CD4-positive, alpha-beta T cell (primary cell): ENCODE measurements at regions of chr7 and their contacts with region 1.

Region 1: GRCh38 chr7:23696916-23697441 is 13.0 kb upstream of the STK31 start:
- DNase-seq: peak; percentile 24 to 76 (median 45)
- ATAC-seq: peak; percentile 49
- H3K4me3 ChIP-seq: no peak overlapping the region
- H3K4me3 Mint-ChIP-seq: no peak overlapping the region
- H3K27ac ChIP-seq: no peak overlapping the region
- H3K27ac Mint-ChIP-seq: no peak overlapping the region
- H3K4me1 ChIP-seq: peaks cover 5% of the 10 kb centered on the region
- H3K4me1 Mint-ChIP-seq: no peaks in the 10 kb centered on the region
- H3K27me3 ChIP-seq: no peaks in the 10 kb centered on the region
- H3K27me3 Mint-ChIP-seq: no peaks in the 10 kb centered on the region
- CTCF ChIP-seq: peak; percentile 70

Region 2: GRCh38 chr7:23558303-23558702 is 138.7 kb before region 1 on chr7:
- CTCF ChIA-PET with region 1: no interaction called
- POLR2A ChIA-PET with region 1: no interaction called
- intact Hi-C with region 1: loop called in 1 of 2 experiments (anchors 5 kb)
- DNase-seq: no peak
- ATAC-seq: no peak
- H3K4me3 ChIP-seq: no peak overlapping the region
- H3K4me3 Mint-ChIP-seq: no peak overlapping the region
- H3K27ac ChIP-seq: no peak overlapping the region
- H3K27ac Mint-ChIP-seq: no peak overlapping the region
- H3K4me1 ChIP-seq: no peaks in the 10 kb centered on the region
- H3K4me1 Mint-ChIP-seq: no peaks in the 10 kb centered on the region
- H3K27me3 ChIP-seq: no peaks in the 10 kb centered on the region
- H3K27me3 Mint-ChIP-seq: peaks cover 12% of the 10 kb centered on the region
- CTCF ChIP-seq: no peak

Region 3: GRCh38 chr7:23685731-23686130 is 11.2 kb before region 1 on chr7:
- CTCF ChIA-PET with region 1: interaction called, 26 read pairs
- POLR2A ChIA-PET with region 1: no interaction called
- intact Hi-C with region 1: no loop called
- DNase-seq: no peak
- ATAC-seq: no peak
- H3K4me3 ChIP-seq: no peak overlapping the region
- H3K4me3 Mint-ChIP-seq: no peak overlapping the region
- H3K27ac ChIP-seq: no peak overlapping the region
- H3K27ac Mint-ChIP-seq: no peak overlapping the region
- H3K4me1 ChIP-seq: peaks cover 10% of the 10 kb centered on the region
- H3K4me1 Mint-ChIP-seq: peaks cover 9% of the 10 kb centered on the region
- H3K27me3 ChIP-seq: no peaks in the 10 kb centered on the region
- H3K27me3 Mint-ChIP-seq: no peaks in the 10 kb centered on the region
- CTCF ChIP-seq: no peak